ENCODE measurements at regions of chr5 and their contacts with region 1.

Region 1: GRCh38 chr5:150486402-150487198 is 21.3 kb upstream of the NDST1 start:
- DNase-seq: peak; percentile 64 to 70
- ATAC-seq: peak; percentile 54 to 62
- H3K4me3 ChIP-seq: peak overlapping the region; percentile 87
- H3K27ac ChIP-seq: peak overlapping the region; percentile 98 to 100
- H3K4me1 ChIP-seq: peaks cover 53% of the 10 kb centered on the region
- CTCF ChIP-seq: no peak
- EP300 ChIP-seq: no peak
- POLR2A ChIP-seq: no peak
- RAD21 ChIP-seq: no peak; a peak in 1 of 5 replicates

Region 2: DNA sequence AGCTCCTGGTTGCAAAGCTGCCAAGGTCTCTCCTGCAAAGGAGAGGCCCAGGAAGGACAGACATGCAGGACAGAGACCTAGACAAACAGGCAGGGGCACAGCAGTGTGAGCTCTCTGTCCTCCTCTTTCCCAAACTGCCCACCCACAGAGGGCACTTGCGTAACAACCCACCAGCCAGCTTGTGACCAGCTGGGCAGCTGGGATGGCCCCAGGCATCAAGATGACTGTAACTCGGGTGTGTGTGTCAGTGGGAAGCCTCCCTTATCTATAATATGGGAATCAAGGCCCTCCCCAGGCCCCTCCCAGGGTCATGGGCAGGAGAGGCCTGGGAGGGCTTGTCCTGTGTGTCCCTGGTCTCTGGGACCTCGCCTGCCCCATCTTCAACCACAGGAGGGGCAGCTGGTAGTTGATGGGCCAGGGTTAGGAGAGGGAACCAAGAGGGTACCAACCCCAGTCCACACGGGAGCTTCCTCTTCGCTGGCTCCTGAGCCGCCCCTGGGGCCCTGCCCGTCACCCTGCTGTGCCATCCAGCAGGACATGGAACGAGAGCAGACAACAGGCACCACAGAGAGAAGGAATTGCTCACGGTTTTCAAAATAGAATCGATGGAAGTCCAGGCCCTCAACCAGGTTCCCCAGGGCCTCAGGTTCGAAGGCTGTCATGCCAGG is 258.9 kb before region 1 on chr5:
- CTCF ChIA-PET with region 1: no interaction called
- POLR2A ChIA-PET with region 1: no interaction called
- DNase-seq: peak in 1 of 2 experiments; percentile 7
- ATAC-seq: peak; percentile 23 to 37; a peak in 4 of 6 replicates
- H3K4me3 ChIP-seq: no peak overlapping the region
- H3K27ac ChIP-seq: peak overlapping the region in 1 of 2 experiments; percentile 30; a peak in 1 of 6 replicates
- H3K4me1 ChIP-seq: peaks cover 7% of the 10 kb centered on the region; the same call in 1 of the 3 replicates
- CTCF ChIP-seq: no peak
- EP300 ChIP-seq: no peak
- POLR2A ChIP-seq: no peak
- RAD21 ChIP-seq: no peak

Region 3: DNA sequence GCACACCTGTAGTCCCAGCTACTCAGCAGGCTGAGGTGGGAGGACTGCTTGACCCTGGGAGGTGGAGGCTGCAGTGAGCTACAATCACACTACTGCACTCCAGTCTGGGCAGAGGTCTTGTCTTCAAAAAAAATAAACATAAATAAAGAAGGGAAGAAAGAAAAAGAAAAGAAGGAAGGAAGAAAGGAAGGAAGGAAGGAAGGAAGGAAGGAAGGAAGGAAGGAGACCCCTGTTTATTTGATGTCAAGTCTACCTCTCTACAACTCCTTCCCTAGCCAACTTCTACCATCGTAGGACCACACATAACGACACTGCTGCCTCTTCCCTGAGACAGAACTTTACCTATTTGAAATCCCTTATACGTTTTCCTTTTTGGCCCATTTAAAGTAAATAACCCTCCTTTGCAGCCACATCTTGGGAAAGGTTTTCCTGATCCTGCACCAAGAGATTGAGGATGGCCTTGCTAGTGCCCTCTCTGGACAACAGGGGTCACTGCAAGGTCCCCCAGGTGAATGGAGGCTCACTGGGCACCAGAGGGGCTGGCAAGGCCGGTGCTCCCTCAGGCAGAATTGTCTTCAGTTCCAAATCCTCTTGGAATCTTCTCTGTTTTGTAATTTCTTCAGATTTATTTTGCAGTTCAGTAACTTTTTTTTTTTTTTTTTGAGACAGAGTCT is 47.6 kb before region 1 on chr5:
- CTCF ChIA-PET with region 1: no interaction called
- POLR2A ChIA-PET with region 1: no interaction called
- DNase-seq: peak; percentile 68 to 83
- ATAC-seq: peak; percentile 55 to 67; a peak in 4 of 6 replicates
- H3K4me3 ChIP-seq: no peak overlapping the region
- H3K27ac ChIP-seq: no peak overlapping the region
- H3K4me1 ChIP-seq: 0 out of 3 replicates have a peak, but pooled peaks cover 4% of the 10 kb centered on the region
- CTCF ChIP-seq: peak; percentile 49
- EP300 ChIP-seq: no peak
- POLR2A ChIP-seq: no peak
- RAD21 ChIP-seq: 0 out of 5 replicates have a peak, but pooled peaks of 1 of the 2 experiments have one; percentile 23

Region 4: DNA sequence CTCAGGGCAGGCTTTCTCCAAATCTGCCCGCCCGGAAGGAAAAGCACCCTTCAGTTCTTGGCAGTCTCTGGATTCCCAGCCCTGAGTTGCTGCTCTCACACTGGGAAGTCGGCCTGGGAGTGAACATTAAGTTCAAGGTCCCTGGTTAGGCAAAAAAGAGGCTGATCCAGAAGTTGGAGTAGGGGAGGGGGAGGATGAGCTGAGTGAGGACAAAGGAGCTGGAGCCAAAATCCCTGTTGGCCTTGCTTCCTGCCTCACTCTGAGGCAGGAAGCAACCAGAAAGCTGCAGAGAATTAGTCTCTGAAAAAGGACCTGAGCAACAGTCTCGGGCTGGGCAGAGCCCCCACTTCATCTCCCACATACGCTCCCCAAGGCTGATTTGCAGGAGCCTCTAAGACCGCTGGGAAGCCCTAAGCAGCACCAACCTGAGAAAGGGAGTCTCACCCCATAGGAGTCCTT is 22.0 kb before region 1 on chr5:
- CTCF ChIA-PET with region 1: interaction called, 26 read pairs
- POLR2A ChIA-PET with region 1: no interaction called
- DNase-seq: no peak
- ATAC-seq: peak in 1 of 2 experiments; percentile 10; a peak in 2 of 6 replicates
- H3K4me3 ChIP-seq: no peak overlapping the region
- H3K27ac ChIP-seq: peak overlapping the region; percentile 3 to 79; a peak in 4 of 6 replicates
- H3K4me1 ChIP-seq: peaks cover 53% of the 10 kb centered on the region
- CTCF ChIP-seq: no peak
- EP300 ChIP-seq: no peak
- POLR2A ChIP-seq: no peak
- RAD21 ChIP-seq: no peak

Region 5: DNA sequence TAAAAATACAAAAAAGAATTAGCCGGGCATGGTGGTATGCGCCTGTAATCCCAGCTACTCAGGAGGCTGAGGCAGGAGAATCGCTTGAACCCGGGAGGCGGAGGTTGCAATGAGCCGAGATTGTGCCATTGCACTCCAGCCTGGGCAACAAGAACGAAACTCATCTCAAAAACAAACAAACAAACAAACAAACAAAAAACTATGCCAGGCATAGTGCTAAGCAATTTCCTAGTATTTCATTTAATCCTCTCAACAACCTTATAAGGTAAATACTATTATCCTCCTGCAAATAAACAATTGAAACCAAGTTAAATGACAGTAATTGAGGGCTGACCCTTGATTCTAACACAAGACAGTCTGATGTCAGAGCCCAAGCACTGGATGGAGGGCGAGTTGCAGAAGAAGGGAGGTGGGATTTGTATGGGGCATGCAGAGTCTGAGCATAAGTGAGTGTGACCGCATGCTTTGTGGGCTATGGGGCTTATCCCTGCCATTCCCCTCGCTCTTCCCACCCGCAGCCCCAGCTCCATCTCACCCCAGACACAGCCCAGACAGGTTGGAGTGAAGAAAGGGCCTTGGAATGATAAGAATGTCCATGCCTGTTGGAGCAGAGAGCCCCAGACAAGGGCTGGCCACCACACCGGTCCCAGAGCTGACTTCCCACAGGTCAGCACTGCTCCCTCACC is 12.8 kb before region 1 on chr5:
- CTCF ChIA-PET with region 1: interaction called, 6 read pairs
- POLR2A ChIA-PET with region 1: interaction called, 10 read pairs
- DNase-seq: peak in 1 of 2 experiments; percentile 90
- ATAC-seq: peak; percentile 72 to 83
- H3K4me3 ChIP-seq: no peak overlapping the region
- H3K27ac ChIP-seq: peak overlapping the region; percentile 86 to 96
- H3K4me1 ChIP-seq: peaks cover 58% of the 10 kb centered on the region
- CTCF ChIP-seq: no peak
- EP300 ChIP-seq: 0 out of 5 replicates have a peak, but pooled peaks of 1 of the 2 experiments have one; percentile 67
- POLR2A ChIP-seq: no peak
- RAD21 ChIP-seq: peak in 1 of 2 experiments; percentile 41; a peak in 1 of 5 replicates

Region 6: GRCh38 chr5:150497274-150497988 is 10.8 kb after region 1 on chr5:
- CTCF ChIA-PET with region 1: interaction called, 15 read pairs
- POLR2A ChIA-PET with region 1: interaction called, 8 read pairs
- DNase-seq: peak; percentile 88 to 99
- ATAC-seq: peak; percentile 97 to 98
- H3K4me3 ChIP-seq: peak overlapping the region; percentile 29
- H3K27ac ChIP-seq: peak overlapping the region; percentile 88 to 90
- H3K4me1 ChIP-seq: peaks cover 79% of the 10 kb centered on the region
- CTCF ChIP-seq: no peak
- EP300 ChIP-seq: no peak
- POLR2A ChIP-seq: no peak
- RAD21 ChIP-seq: 0 out of 5 replicates have a peak, but pooled peaks of 1 of the 2 experiments have one; percentile 15

Region 7: GRCh38 chr5:150503977-150504620 is 17.5 kb after region 1 on chr5:
- CTCF ChIA-PET with region 1: interaction called, 439 read pairs
- POLR2A ChIA-PET with region 1: no interaction called
- DNase-seq: no peak
- ATAC-seq: 0 out of 6 replicates have a peak, but pooled peaks of 1 of the 2 experiments have one; percentile 6
- H3K4me3 ChIP-seq: no peak overlapping the region
- H3K27ac ChIP-seq: peak overlapping the region in 1 of 2 experiments; percentile 57; a peak in 3 of 6 replicates
- H3K4me1 ChIP-seq: peaks cover 84% of the 10 kb centered on the region
- CTCF ChIP-seq: no peak
- EP300 ChIP-seq: no peak
- POLR2A ChIP-seq: no peak
- RAD21 ChIP-seq: no peak

Region 8: GRCh38 chr5:150523472-150524350 is 37.1 kb after region 1 on chr5:
- CTCF ChIA-PET with region 1: interaction called, 439 read pairs
- POLR2A ChIA-PET with region 1: no interaction called
- DNase-seq: peak; percentile 75 to 87
- ATAC-seq: peak; percentile 81 to 87
- H3K4me3 ChIP-seq: no peak overlapping the region
- H3K27ac ChIP-seq: peak overlapping the region; percentile 52 to 92; a peak in 5 of 6 replicates
- H3K4me1 ChIP-seq: peaks cover 59% of the 10 kb centered on the region
- CTCF ChIP-seq: peak; percentile 75
- EP300 ChIP-seq: no peak
- POLR2A ChIP-seq: no peak
- RAD21 ChIP-seq: peak; percentile 74 to 82

Region 9: DNA sequence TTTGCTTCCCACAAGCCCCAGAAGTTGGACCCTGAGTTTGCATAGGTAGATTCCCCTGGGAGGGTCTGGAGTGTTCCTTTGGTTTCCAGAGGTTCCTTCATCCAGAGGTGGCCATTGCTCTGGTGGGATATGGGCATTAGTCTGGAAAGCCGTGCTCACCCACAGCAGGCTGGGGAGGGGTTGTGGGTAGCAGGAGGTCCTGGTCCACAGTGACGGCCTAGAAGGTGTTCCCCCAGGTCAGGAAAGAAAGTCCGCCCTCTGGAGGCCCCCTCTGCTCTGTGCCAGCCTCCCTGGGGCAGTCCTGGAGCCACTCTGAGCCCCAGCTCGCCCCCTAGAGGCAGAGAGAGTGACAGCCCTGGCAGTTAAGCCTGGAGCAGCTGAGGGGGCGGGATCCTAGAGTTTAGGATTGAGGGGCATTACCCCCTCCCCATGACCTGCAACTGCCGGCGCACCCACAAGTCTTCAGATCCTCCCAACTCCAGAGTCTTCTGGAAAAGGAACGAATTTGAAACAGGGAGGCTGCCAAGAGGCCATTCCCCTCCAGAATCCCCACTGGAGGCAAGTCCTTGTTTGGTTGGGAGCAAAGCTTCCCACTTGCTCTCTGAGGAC is 58.1 kb after region 1 on chr5:
- CTCF ChIA-PET with region 1: interaction called, 14 read pairs
- POLR2A ChIA-PET with region 1: no interaction called
- DNase-seq: peak; percentile 68 to 96
- ATAC-seq: peak; percentile 88 to 94
- H3K4me3 ChIP-seq: no peak overlapping the region
- H3K27ac ChIP-seq: peak overlapping the region in 1 of 2 experiments; percentile 27; a peak in 2 of 6 replicates
- H3K4me1 ChIP-seq: peaks cover 25% of the 10 kb centered on the region
- CTCF ChIP-seq: peak; percentile 82
- EP300 ChIP-seq: no peak
- POLR2A ChIP-seq: no peak
- RAD21 ChIP-seq: peak; percentile 77 to 78